B cell (primary cell): ENCODE measurements at regions of chr17 and their contacts with region 1.

Region 1: GRCh38 chr17:45135192-45135977 is at the start of gene ACBD4:
- DNase-seq: peak; percentile 98
- ATAC-seq: peak; percentile 83
- H3K4me3 ChIP-seq: peak within 1 kb of the TSS; percentile 35 to 96 (median 90)
- H3K4me3 Mint-ChIP-seq: peak within 1 kb of the TSS; percentile 95
- H3K27ac ChIP-seq: peak within 1 kb of the TSS; percentile 54 to 76
- H3K27ac Mint-ChIP-seq: peak within 1 kb of the TSS; percentile 87
- H3K4me1 ChIP-seq: peaks cover 17 to 24% of the 10 kb centered on the region in 2 donors
- H3K4me1 Mint-ChIP-seq: peaks cover 20% of the 10 kb centered on the region
- H3K27me3 ChIP-seq: peaks cover 0 to 10% (median 0%) of the 10 kb centered on the region in 4 experiments
- H3K27me3 Mint-ChIP-seq: peaks cover 4% of the 10 kb centered on the region
- CTCF ChIP-seq: peak; percentile 100
- total RNA-seq, gene ACBD4: 39.4 and 43.6 TPM in 2 replicates

Region 2: GRCh38 chr17:44947461-44948314 is 187.7 kb before region 1 on chr17 and contains the start of gene KIF18B:
- CTCF ChIA-PET with region 1: no interaction called
- POLR2A ChIA-PET with region 1: no interaction called
- intact Hi-C with region 1: loop called (anchors 1 kb)
- DNase-seq: peak; percentile 91
- ATAC-seq: peak; percentile 98
- H3K4me3 ChIP-seq: peak within 1 kb of the TSS; percentile 62 to 79 (median 67)
- H3K4me3 Mint-ChIP-seq: peak within 1 kb of the TSS; percentile 99
- H3K27ac ChIP-seq: peak within 1 kb of the TSS; percentile 56 to 64
- H3K27ac Mint-ChIP-seq: peak within 1 kb of the TSS; percentile 95
- H3K4me1 ChIP-seq: peaks cover 7 to 15% of the 10 kb centered on the region in 2 donors
- H3K4me1 Mint-ChIP-seq: peaks cover 8% of the 10 kb centered on the region
- H3K27me3 ChIP-seq: peaks cover 0 to 4% (median 4%) of the 10 kb centered on the region in 4 experiments
- H3K27me3 Mint-ChIP-seq: peaks cover 6% of the 10 kb centered on the region
- CTCF ChIP-seq: no peak
- total RNA-seq, gene KIF18B: 0.44 TPM in 1 of 2 replicates, not detected in the other

Region 3: DNA sequence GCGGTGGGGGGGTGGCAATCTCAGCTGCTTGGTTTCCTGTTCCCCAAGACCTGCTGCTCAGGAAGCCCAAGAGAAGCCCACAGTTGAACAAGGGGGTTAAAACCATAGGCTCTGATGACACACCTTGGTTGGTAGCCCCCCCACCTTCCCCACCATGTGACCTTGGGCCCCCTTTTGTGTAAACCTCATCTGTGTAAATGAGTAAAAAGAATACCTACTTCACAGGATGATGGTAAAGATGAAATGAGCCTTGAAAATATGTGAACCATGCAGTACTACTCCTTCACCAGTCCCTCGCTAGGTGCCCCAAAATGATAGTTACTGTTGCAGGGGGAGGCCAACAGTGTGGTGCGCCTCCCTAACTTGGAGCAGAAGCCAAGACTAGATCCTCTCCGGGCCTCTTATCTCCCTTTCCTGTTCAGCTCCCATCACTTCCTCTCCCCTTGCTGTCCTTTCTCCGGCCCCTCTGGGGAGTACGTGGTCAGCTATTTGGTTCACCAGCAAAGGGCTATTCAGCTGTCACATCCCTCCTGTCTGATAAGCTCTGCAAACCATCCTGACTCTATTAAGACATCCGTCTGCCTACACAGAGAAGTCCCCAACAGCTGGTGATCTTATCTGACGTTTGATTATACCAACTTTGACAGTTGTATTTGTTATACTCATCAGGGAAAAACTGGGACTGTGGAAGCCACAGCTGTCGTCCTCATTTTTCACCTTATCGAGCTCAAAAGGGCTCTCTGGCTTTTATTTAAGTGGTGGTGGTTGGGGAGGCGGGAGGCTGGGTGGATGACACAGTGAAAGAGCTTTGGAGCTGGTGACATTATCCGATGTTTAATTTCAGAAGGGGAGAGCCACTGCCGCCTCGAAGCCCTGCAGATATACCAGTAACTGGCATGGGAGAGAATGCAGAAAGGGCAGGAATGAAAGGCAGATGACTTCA is 103.9 kb before region 1 on chr17:
- CTCF ChIA-PET with region 1: no interaction called
- POLR2A ChIA-PET with region 1: no interaction called
- intact Hi-C with region 1: no loop called
- DNase-seq: no peak
- ATAC-seq: no peak
- H3K4me3 ChIP-seq: no peak overlapping the region
- H3K4me3 Mint-ChIP-seq: no peak overlapping the region
- H3K27ac ChIP-seq: no peak overlapping the region
- H3K27ac Mint-ChIP-seq: no peak overlapping the region
- H3K4me1 ChIP-seq: no peaks in the 10 kb centered on the region
- H3K4me1 Mint-ChIP-seq: no peaks in the 10 kb centered on the region
- H3K27me3 ChIP-seq: no peaks in the 10 kb centered on the region
- H3K27me3 Mint-ChIP-seq: no peaks in the 10 kb centered on the region
- CTCF ChIP-seq: no peak

Region 4: DNA sequence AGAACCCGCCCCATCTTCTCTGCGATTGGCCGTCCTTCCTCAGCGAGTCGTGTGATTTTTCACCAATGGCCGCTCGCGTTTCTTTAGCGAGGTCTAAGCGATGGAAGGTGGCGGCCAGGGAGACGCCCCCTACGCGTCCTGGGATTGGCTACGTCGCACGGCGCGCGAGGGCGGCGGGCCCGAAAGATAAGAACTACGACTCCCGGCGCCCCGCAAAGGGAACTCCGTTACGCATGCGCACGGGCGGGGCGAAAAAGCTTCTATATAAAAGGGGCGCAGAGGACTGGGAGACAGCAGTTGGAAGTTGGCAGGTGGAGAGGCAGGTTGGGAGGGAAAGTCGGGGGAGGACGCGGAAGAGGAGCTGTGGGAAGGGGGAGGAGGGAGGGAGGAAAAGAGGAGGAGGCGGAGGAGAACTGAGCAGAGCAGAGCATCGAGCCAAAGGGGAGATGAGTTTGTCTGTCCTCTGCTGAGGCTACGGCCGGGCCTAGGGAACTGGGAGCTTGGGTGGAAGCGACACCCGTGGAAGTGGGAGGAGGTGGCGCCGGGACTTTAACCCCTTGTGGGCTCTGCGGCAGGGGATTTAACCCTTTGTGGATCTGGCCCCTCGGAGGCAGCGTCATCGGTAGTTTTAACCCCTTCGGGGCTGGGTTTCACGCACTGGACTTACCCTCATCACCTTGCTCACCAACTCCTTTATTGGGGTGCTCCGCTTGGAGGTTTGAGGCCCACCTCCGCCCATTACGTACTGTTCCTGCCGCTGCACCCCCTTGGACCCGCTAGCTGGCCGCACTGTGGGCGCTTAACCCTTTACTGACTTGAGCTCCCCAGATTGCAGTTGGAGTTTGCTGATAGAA is 13.0 kb after region 1 on chr17 and contains the start of gene HEXIM1:
- CTCF ChIA-PET with region 1: interaction called, 242 read pairs
- POLR2A ChIA-PET with region 1: interaction called, 36 read pairs
- intact Hi-C with region 1: loop called (anchors 1 kb)
- DNase-seq: peak; percentile 100
- ATAC-seq: peak; percentile 74
- H3K4me3 ChIP-seq: peak within 1 kb of the TSS; percentile 69 to 99 (median 85)
- H3K4me3 Mint-ChIP-seq: peak within 1 kb of the TSS; percentile 91
- H3K27ac ChIP-seq: peak within 1 kb of the TSS; percentile 97 to 98
- H3K27ac Mint-ChIP-seq: peak within 1 kb of the TSS; percentile 99
- H3K4me1 ChIP-seq: peaks cover 38 to 66% of the 10 kb centered on the region in 2 donors
- H3K4me1 Mint-ChIP-seq: peaks cover 61% of the 10 kb centered on the region
- H3K27me3 ChIP-seq: no peaks in the 10 kb centered on the region
- H3K27me3 Mint-ChIP-seq: no peaks in the 10 kb centered on the region
- CTCF ChIP-seq: no peak
- total RNA-seq, gene HEXIM1: 48.9 and 49.6 TPM in 2 replicates

Region 5: GRCh38 chr17:45172454-45173286 is 37.3 kb after region 1 on chr17:
- CTCF ChIA-PET with region 1: interaction called, 26 read pairs
- POLR2A ChIA-PET with region 1: no interaction called
- intact Hi-C with region 1: loop called (anchors 1 kb)
- DNase-seq: peak; percentile 59
- ATAC-seq: peak; percentile 85
- H3K4me3 ChIP-seq: peak overlapping the region in 4 of 5 experiments; percentile 31 to 51 (median 49)
- H3K4me3 Mint-ChIP-seq: peak overlapping the region; percentile 86
- H3K27ac ChIP-seq: peak overlapping the region; percentile 40 to 63
- H3K27ac Mint-ChIP-seq: peak overlapping the region; percentile 97
- H3K4me1 ChIP-seq: peaks cover 11 to 16% of the 10 kb centered on the region in 2 donors
- H3K4me1 Mint-ChIP-seq: peaks cover 12% of the 10 kb centered on the region
- H3K27me3 ChIP-seq: no peaks in the 10 kb centered on the region
- H3K27me3 Mint-ChIP-seq: no peaks in the 10 kb centered on the region
- CTCF ChIP-seq: no peak

Region 6: DNA sequence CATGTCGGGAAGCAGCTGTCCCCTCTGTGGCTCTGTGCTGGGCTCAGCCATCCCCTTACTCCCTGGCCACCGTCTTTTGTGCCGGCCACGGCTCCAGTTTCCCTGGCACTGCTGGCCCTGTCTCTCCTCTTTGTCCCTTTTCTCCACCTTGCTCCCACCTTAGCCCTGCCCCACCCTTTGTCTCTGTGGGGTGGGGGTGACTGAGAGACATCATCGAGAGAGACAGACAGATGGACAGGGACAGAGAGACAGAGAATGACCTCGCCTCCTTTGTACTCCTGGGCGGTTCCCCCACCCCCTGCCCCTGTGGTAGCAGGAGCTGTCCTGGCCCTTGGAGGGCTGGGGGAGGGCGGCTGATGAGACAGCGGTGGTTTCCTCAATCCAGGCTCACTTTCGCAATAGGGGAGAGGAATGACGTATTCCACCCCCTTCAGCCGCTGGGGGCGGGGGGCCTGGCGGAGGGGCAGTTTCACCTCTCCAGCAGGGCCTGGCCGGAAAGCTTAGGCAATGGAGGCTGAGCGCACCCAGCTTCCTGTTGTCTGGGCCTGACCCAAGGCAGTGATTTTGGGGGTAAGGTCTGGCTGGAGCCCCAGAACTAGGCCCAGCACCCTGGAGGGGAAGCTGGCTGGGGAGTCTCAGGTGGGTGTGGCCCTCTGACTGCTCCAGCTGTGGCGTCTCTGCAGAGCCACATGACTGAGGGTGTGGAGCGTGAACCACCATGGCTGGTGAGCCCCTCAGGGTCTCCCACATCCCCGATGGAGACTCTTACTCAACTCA is 93.6 kb after region 1 on chr17:
- CTCF ChIA-PET with region 1: interaction called, 14 read pairs
- POLR2A ChIA-PET with region 1: interaction called, 4 read pairs
- intact Hi-C with region 1: no loop called
- DNase-seq: peak; percentile 94
- ATAC-seq: peak; percentile 52
- H3K4me3 ChIP-seq: peak overlapping the region; percentile 8 to 96 (median 90)
- H3K4me3 Mint-ChIP-seq: peak overlapping the region; percentile 100
- H3K27ac ChIP-seq: peak overlapping the region; percentile 99 to 100
- H3K27ac Mint-ChIP-seq: peak overlapping the region; percentile 99
- H3K4me1 ChIP-seq: peaks cover 70 to 90% of the 10 kb centered on the region in 2 donors
- H3K4me1 Mint-ChIP-seq: peaks cover 95% of the 10 kb centered on the region
- H3K27me3 ChIP-seq: no peaks in the 10 kb centered on the region
- H3K27me3 Mint-ChIP-seq: no peaks in the 10 kb centered on the region
- CTCF ChIP-seq: no peak

Region 7: GRCh38 chr17:45317112-45317928 is 181.9 kb after region 1 on chr17:
- CTCF ChIA-PET with region 1: interaction called, 5 read pairs
- POLR2A ChIA-PET with region 1: no interaction called
- intact Hi-C with region 1: loop called (anchors 1 kb)
- DNase-seq: peak; percentile 100
- ATAC-seq: peak; percentile 80
- H3K4me3 ChIP-seq: peak overlapping the region; percentile 32 to 90 (median 62)
- H3K4me3 Mint-ChIP-seq: peak overlapping the region; percentile 92
- H3K27ac ChIP-seq: peak overlapping the region; percentile 47 to 93
- H3K27ac Mint-ChIP-seq: peak overlapping the region; percentile 95
- H3K4me1 ChIP-seq: peaks cover 39 to 41% of the 10 kb centered on the region in 2 donors
- H3K4me1 Mint-ChIP-seq: peaks cover 48% of the 10 kb centered on the region
- H3K27me3 ChIP-seq: no peaks in the 10 kb centered on the region
- H3K27me3 Mint-ChIP-seq: no peaks in the 10 kb centered on the region
- CTCF ChIP-seq: no peak